ENCODE measurements at regions of chr13 and their contacts with region 1.

Region 1: DNA sequence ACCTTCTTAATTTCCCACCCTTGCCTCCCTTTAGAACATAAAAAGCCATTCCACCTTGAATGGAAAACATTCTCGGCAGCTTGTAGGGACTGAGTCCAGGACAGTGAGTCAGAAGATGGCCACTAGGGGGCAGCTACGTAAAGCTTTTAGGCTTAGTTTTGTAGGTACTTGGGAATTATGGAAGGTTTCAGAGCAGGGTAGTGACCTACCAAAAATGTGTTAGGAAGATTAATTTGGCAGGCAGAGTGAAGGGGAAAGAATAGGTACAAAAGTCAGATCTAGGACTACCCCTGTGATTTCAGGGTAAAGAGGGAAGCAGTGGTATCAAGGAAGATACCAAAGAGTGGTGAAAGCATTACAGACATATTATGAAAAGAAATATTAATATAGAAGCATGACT is 198.4 kb downstream of the NDFIP2 start:
- DNase-seq: peak; percentile 14
- CTCF ChIP-seq: peak; percentile 92

Region 2: DNA sequence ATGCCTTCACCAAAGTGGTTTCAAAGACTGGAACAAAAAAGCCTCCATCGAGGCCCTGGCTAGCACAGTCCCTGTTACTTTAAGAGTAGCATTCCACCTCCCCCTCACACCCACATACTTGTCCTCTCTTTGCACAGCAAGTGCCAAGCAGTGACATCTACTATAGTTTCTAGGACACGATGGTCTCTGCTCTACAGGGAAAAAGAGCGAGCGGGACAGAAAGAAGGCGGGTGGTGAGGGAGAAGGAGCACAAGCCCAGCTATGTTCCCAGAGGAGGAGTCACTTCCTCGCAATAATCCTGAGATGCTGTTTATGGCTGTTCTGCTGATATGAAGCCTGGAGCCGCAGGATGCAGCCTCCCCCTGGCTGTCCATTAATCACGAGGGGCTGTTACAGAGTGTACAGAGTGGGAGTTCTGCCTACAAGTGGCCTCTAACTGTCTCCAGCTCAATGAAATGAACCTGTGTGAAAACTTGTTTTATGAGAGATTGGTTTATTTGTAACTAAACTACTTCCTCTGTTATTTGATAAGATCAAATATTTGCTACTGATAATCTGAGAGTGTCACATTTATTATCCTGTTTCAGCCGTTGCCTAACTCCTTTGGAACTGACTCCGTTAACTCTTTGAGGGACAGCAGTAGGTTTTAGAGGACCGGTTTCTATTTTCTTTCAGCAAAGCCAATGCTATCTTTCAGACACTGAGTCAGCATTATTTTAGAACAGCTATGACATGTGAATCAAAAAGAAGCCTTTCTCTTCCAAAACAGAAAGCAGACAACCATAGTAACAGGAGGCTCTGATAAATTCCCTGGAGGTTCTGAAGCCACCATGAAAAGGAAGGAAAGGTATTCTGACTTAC is 453.6 kb after region 1 on chr13:
- in situ Hi-C with region 1: no loop called
- DNase-seq: no peak
- CTCF ChIP-seq: no peak

Region 3: DNA sequence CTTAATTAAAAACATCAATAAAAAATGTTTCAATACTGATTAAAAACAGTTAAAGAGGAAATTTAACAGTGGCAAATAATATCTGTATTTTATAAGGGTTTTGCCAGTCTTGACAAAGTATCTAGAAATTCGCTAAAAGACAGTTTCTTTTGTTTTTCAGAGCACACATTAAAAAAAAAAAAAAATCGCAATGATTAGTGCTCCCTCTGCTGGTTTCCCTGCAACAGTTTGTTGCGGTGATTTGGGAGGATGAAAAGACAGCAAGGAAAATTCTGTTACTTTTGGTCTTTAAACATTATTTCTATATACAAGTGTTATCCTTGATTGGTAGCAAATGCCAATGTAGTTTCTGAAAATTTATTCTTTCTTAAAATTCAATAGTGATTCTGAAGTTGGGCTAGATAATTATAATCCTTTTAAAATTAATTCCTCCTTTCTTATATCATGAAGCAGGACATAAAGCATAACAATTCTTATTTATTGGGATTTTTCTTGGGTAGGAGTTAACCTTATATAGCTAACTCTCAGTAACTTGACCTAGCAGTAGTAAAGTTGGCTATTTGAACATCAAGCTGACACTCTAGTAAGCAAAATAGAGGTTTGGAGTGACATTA is 684.7 kb after region 1 on chr13:
- in situ Hi-C with region 1: loop called (anchors 25 kb)
- DNase-seq: no peak
- CTCF ChIP-seq: peak; percentile 68

Region 4: GRCh38 chr13:81017513-81018152 is 1338.3 kb after region 1 on chr13:
- in situ Hi-C with region 1: loop called (anchors 25 kb)
- DNase-seq: peak; percentile 29
- CTCF ChIP-seq: peak; percentile 67